ENCODE measurements at regions of chr5 and their contacts with region 1.

Region 1: DNA sequence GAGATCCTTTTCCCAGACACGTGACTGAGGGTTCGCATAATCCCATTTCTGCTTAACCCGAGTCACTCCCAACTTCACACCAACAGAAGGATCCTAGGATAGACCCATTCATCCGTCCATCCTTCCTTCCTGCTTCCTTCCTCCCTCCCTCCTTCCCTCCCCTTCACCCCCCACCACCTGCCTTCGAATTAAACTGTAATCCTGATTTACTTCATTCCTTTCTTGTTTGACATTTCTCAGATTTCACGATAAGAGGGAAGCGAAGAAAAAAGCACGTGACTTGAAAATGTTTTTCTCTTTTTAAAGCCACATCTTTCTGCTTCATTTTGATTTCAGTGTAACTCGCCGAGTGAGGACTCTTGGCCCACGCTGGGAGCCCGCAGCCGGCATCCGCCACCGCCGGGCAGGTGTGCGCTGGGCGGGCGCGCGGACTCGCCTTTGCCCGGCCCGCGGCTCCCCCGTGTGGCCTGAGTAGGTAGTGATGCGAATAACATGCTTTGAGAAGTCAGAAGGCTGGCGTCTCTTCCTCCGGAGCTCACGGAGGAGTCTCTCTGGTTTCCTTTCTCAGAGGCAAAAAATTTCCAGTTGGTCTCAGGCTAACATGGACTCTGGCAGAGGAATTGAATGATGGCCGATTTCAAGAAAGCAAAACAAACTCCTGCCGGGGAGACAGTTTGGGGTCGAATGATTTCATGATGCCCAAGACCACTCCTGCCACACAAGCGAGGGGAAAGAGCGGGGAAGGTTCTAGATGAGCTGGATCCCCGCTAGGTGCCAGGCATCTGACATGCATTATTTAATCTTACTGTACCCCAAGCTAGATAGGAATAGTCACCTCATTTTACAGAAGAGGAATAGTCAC is 117.7 kb downstream of the SLC12A2 start:
- DNase-seq: peak; percentile 70 to 93
- ATAC-seq: peak; percentile 83

Region 2: DNA sequence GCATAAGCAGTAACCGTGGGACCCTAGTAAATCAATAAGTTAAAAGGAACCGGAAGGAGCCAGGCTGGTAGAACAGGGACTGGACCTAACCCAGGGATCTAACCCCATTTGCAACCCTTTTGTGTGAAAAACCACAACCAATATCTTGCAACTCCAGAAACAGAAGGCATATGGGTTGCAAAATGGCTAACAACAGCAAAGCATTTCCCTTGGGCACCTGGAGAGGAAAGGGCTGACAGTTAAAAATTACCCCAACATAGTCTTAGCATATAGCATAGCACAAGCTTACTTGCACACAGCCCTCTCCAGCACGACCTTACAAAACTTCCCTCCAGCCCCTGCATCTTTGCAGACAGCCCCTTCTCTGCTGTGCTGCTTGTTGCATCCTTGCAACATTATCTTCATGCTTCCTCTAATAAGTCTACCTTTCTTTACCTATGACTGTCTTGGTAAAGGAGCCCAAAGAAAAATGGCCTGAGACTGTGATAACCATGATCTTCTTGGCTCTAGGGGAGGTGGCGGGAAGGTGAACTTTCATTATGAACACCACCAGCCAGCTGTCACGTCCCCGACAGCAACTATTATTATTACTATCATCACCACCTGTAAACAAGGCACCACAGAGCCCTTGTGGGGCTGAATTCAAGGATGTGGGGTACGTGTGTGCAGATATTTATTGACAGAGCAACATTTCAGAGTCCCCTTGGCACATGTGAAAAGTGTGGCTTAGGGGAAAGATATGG is 634.1 kb before region 1 on chr5:
- intact Hi-C with region 1: loop called in 1 of 2 experiments (anchors 5 kb)
- DNase-seq: no peak
- ATAC-seq: no peak

Region 3: GRCh38 chr5:127766676-127767340 is 434.5 kb before region 1 on chr5:
- intact Hi-C with region 1: loop called in 1 of 2 experiments (anchors 10 kb)
- DNase-seq: no peak
- ATAC-seq: no peak